ENCODE measurements at regions of chr7 and their contacts with region 1.

Region 1: GRCh38 chr7:48964074-48964473 is 39.7 kb downstream of the CDC14C start:
- DNase-seq: no peak
- H3K4me3 ChIP-seq: no peak overlapping the region
- H3K27ac ChIP-seq: no peak overlapping the region
- H3K4me1 ChIP-seq: no peaks in the 10 kb centered on the region
- H3K27me3 ChIP-seq: no peaks in the 10 kb centered on the region
- CTCF ChIP-seq: no peak
- POLR2A ChIP-seq: no peak

Region 2: GRCh38 chr7:48691788-48692187 is 272.3 kb before region 1 on chr7:
- intact Hi-C with region 1: no loop called
- DNase-seq: no peak
- H3K4me3 ChIP-seq: no peak overlapping the region
- H3K27ac ChIP-seq: no peak overlapping the region
- H3K4me1 ChIP-seq: no peaks in the 10 kb centered on the region
- H3K27me3 ChIP-seq: no peaks in the 10 kb centered on the region
- CTCF ChIP-seq: no peak
- POLR2A ChIP-seq: no peak

Region 3: GRCh38 chr7:48976253-48976652 is 12.2 kb after region 1 on chr7:
- intact Hi-C with region 1: no loop called
- DNase-seq: no peak
- H3K4me3 ChIP-seq: no peak overlapping the region
- H3K27ac ChIP-seq: no peak overlapping the region
- H3K4me1 ChIP-seq: no peaks in the 10 kb centered on the region
- H3K27me3 ChIP-seq: no peaks in the 10 kb centered on the region
- CTCF ChIP-seq: no peak
- POLR2A ChIP-seq: no peak

Region 4: DNA sequence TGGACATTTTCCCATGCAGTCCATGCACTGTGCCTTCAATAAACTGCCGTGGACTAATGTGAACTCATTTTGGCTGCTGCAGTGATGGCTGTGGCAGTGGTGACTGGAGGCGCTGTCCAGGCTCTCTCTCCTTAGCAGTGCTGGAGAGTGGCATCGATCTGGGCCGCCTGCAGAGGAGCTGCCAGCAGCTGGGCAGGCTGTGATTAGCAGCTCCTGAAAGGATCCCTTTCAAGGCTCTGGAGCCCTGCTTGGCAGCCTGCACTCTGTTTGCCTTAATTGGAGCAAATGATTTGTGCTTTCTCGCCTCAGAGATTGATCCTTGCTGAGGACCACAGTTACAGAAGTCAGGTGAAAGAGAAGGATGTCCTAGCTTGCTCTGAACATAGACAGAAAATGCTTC is 679.2 kb after region 1 on chr7:
- intact Hi-C with region 1: loop called (anchors 5 kb)
- DNase-seq: no peak
- H3K4me3 ChIP-seq: no peak overlapping the region
- H3K27ac ChIP-seq: no peak overlapping the region
- H3K4me1 ChIP-seq: no peaks in the 10 kb centered on the region
- H3K27me3 ChIP-seq: no peaks in the 10 kb centered on the region
- CTCF ChIP-seq: no peak
- POLR2A ChIP-seq: no peak